Body of pancreas (tissue), 4 donors: ENCODE measurements at regions of chr12 and their contacts with region 1.

Region 1: GRCh38 chr12:26101350-26101734 is 23.5 kb downstream of the BHLHE41 start:
- DNase-seq: peak; percentile 63 to 89 (median 77)
- ATAC-seq: peak; percentile 89
- H3K4me3 ChIP-seq: no peak overlapping the region
- H3K27ac ChIP-seq: peak overlapping the region; percentile 50 to 80 (median 66)
- H3K4me1 ChIP-seq: peaks cover 15% of the 10 kb centered on the region
- H3K27me3 ChIP-seq: no peaks in the 10 kb centered on the region
- CTCF ChIP-seq: peak in 1 of 7 experiments; percentile 4
- POLR2A ChIP-seq: no peak

Region 2: GRCh38 chr12:26402648-26403047 is 301.3 kb after region 1 on chr12:
- intact Hi-C with region 1: loop called (anchors 5 kb)
- DNase-seq: peak; percentile 65 to 82 (median 78)
- ATAC-seq: peak; percentile 98
- H3K4me3 ChIP-seq: no peak overlapping the region
- H3K27ac ChIP-seq: no peak overlapping the region
- H3K4me1 ChIP-seq: no peaks in the 10 kb centered on the region
- H3K27me3 ChIP-seq: no peaks in the 10 kb centered on the region
- CTCF ChIP-seq: peak; percentile 18 to 86 (median 71)
- POLR2A ChIP-seq: no peak